MCF 10A (cell line): ENCODE measurements at regions of chrX and their contacts with region 1.

Region 1: DNA sequence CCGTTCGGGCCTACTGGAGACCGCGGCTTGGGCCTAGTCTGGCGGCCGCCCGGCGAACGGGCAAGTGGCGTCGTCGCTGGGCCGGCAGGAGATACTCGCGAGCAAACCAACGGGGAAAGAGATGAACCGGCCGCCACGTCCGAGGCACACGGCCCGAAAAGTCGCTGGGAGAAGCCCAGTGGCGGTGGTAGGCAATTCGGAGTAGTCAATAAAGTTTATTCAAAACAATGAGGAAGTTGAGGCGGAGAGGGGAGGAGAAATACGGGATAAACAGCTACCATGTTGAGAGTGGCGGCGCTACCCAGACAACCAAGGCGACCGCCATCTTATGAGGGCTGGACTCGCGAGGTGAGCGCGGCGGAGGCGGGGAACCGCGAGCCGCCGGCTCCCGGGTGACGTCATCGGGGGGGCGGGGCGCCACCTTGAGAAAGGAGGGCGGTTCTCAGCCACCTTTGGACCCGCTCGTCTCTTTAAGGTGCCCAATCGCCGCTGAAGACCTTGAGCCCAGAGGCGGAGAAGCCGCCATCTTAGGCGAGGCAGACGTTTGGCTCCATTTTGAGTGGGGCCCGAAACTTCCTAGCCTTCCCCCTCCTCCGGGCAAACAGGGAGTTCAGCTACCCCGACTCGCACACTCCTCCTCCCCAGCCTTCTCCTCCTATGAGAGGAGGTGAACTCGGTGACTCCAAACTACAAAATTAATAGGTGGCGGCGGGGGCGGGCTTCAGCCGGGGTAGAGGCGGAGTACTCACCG is at the start of gene PHF8:
- DNase-seq: peak; percentile 94
- H3K4me3 Mint-ChIP-seq: peak within 1 kb of the TSS; percentile 86
- H3K27ac Mint-ChIP-seq: peak within 1 kb of the TSS; percentile 99
- H3K4me1 Mint-ChIP-seq: peaks cover 11% of the 10 kb centered on the region
- H3K27me3 Mint-ChIP-seq: peaks cover 24% of the 10 kb centered on the region
- CTCF ChIP-seq: no peak
- total RNA-seq, gene PHF8: 22.5 and 34.1 TPM in 2 replicates

Region 2: GRCh38 chrX:53683556-53684414 is 360.5 kb before region 1 on chrX:
- CTCF ChIA-PET with region 1: no interaction called
- POLR2A ChIA-PET with region 1: interaction called, 12 read pairs
- intact Hi-C with region 1: no loop called
- DNase-seq: peak; percentile 97
- H3K4me3 Mint-ChIP-seq: peak overlapping the region; percentile 71
- H3K27ac Mint-ChIP-seq: peak overlapping the region; percentile 73
- H3K4me1 Mint-ChIP-seq: peaks cover 6% of the 10 kb centered on the region
- H3K27me3 Mint-ChIP-seq: peaks cover 37% of the 10 kb centered on the region
- CTCF ChIP-seq: no peak

Region 3: DNA sequence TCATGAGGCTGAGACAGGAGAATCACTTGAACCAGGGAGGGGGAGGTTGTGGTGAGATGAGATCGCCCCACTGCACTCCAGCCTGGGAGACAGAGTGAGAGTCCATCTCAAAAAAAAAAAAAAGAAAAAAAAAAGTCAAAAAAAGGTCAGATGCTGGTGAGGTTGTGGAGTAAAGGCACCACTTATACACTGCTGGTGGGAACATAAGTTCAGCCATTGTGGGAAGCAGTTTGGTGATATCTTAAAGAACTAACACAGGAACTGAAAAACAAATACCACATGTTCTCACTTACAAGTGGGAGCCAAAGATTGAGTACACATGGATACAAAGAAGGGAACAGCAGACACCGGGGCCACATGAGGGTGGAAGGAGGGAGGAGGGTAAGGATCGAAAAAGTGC is 149.0 kb before region 1 on chrX:
- CTCF ChIA-PET with region 1: no interaction called
- POLR2A ChIA-PET with region 1: no interaction called
- intact Hi-C with region 1: no loop called
- DNase-seq: no peak
- H3K4me3 Mint-ChIP-seq: no peak overlapping the region
- H3K27ac Mint-ChIP-seq: no peak overlapping the region
- H3K4me1 Mint-ChIP-seq: no peaks in the 10 kb centered on the region
- H3K27me3 Mint-ChIP-seq: peaks cover 35% of the 10 kb centered on the region
- CTCF ChIP-seq: no peak

Region 4: GRCh38 chrX:54029529-54030143 is 14.7 kb before region 1 on chrX:
- CTCF ChIA-PET with region 1: interaction called, 7 read pairs
- POLR2A ChIA-PET with region 1: interaction called, 21 read pairs
- intact Hi-C with region 1: no loop called
- DNase-seq: peak; percentile 51
- H3K4me3 Mint-ChIP-seq: no peak overlapping the region
- H3K27ac Mint-ChIP-seq: no peak overlapping the region
- H3K4me1 Mint-ChIP-seq: peaks cover 10% of the 10 kb centered on the region
- H3K27me3 Mint-ChIP-seq: peaks cover 68% of the 10 kb centered on the region
- CTCF ChIP-seq: no peak

Region 5: GRCh38 chrX:54076903-54077302 is 32.6 kb after region 1 on chrX:
- CTCF ChIA-PET with region 1: interaction called, 5 read pairs
- POLR2A ChIA-PET with region 1: interaction called, 27 read pairs
- intact Hi-C with region 1: no loop called
- DNase-seq: peak; percentile 88
- H3K4me3 Mint-ChIP-seq: no peak overlapping the region
- H3K27ac Mint-ChIP-seq: no peak overlapping the region
- H3K4me1 Mint-ChIP-seq: no peaks in the 10 kb centered on the region
- H3K27me3 Mint-ChIP-seq: peaks cover 11% of the 10 kb centered on the region
- CTCF ChIP-seq: no peak

Region 6: GRCh38 chrX:54182864-54183608 is 138.7 kb after region 1 on chrX and contains the start of gene FAM120C:
- CTCF ChIA-PET with region 1: interaction called, 3 read pairs
- POLR2A ChIA-PET with region 1: interaction called, 96 read pairs
- intact Hi-C with region 1: loop called (anchors 1 kb)
- DNase-seq: peak; percentile 77
- H3K4me3 Mint-ChIP-seq: peak within 1 kb of the TSS; percentile 71
- H3K27ac Mint-ChIP-seq: peak within 1 kb of the TSS; percentile 57
- H3K4me1 Mint-ChIP-seq: peaks cover 15% of the 10 kb centered on the region
- H3K27me3 Mint-ChIP-seq: peaks cover 56% of the 10 kb centered on the region
- CTCF ChIP-seq: no peak
- total RNA-seq, gene FAM120C: 11.3 and 12.5 TPM in 2 replicates

Region 7: DNA sequence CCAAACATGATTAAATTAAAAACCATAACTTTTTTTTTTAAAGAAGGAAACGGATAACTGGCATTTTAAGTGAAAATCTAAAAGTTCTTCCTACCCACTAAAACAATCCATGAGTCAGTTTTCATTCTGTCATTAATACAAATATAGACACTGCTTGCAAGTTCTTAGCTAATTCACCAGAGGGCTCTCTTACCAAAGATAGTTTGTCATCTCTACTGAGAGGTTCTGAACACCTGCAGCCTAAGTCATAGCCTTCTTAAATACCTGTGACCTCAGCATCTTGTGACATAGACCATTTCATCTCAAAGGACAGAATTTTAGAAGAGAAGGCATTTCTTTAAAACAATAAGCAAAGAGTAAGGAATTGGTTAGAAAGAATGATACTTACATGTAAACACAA is 204.0 kb after region 1 on chrX:
- CTCF ChIA-PET with region 1: no interaction called
- POLR2A ChIA-PET with region 1: no interaction called
- intact Hi-C with region 1: loop called (anchors 10 kb)
- DNase-seq: peak; percentile 35
- H3K4me3 Mint-ChIP-seq: no peak overlapping the region
- H3K27ac Mint-ChIP-seq: no peak overlapping the region
- H3K4me1 Mint-ChIP-seq: no peaks in the 10 kb centered on the region
- H3K27me3 Mint-ChIP-seq: peaks cover 80% of the 10 kb centered on the region
- CTCF ChIP-seq: peak; percentile 40

Region 8: GRCh38 chrX:54639346-54640102 is 595.2 kb after region 1 on chrX:
- CTCF ChIA-PET with region 1: interaction called, 3 read pairs
- POLR2A ChIA-PET with region 1: interaction called, 8 read pairs
- intact Hi-C with region 1: loop called (anchors 5 kb)
- DNase-seq: peak; percentile 94
- H3K4me3 Mint-ChIP-seq: peak overlapping the region; percentile 78
- H3K27ac Mint-ChIP-seq: peak overlapping the region; percentile 96
- H3K4me1 Mint-ChIP-seq: peaks cover 6% of the 10 kb centered on the region
- H3K27me3 Mint-ChIP-seq: no peaks in the 10 kb centered on the region
- CTCF ChIP-seq: peak; percentile 45